MCF 10A (cell line): ENCODE measurements at regions of chr4 and their contacts with region 1.

Region 1: GRCh38 chr4:173318648-173319211 is 15.4 kb downstream of the HMGB2 start:
- DNase-seq: peak; percentile 56
- H3K4me3 Mint-ChIP-seq: no peak overlapping the region
- H3K27ac Mint-ChIP-seq: no peak overlapping the region
- H3K4me1 Mint-ChIP-seq: peaks cover 12% of the 10 kb centered on the region
- H3K27me3 Mint-ChIP-seq: no peaks in the 10 kb centered on the region
- CTCF ChIP-seq: peak; percentile 46

Region 2: GRCh38 chr4:173307778-173308177 is 11.0 kb before region 1 on chr4:
- CTCF ChIA-PET with region 1: interaction called, 26 read pairs
- POLR2A ChIA-PET with region 1: no interaction called
- intact Hi-C with region 1: no loop called
- DNase-seq: no peak
- H3K4me3 Mint-ChIP-seq: no peak overlapping the region
- H3K27ac Mint-ChIP-seq: no peak overlapping the region
- H3K4me1 Mint-ChIP-seq: no peaks in the 10 kb centered on the region
- H3K27me3 Mint-ChIP-seq: no peaks in the 10 kb centered on the region
- CTCF ChIP-seq: no peak

Region 3: GRCh38 chr4:173334085-173334772 is 15.5 kb after region 1 on chr4 and contains the start of gene HMGB2:
- CTCF ChIA-PET with region 1: interaction called, 13 read pairs
- POLR2A ChIA-PET with region 1: interaction called, 95 read pairs
- intact Hi-C with region 1: no loop called
- DNase-seq: peak; percentile 100
- H3K4me3 Mint-ChIP-seq: peak within 1 kb of the TSS; percentile 99
- H3K27ac Mint-ChIP-seq: peak within 1 kb of the TSS; percentile 100
- H3K4me1 Mint-ChIP-seq: peaks cover 14% of the 10 kb centered on the region
- H3K27me3 Mint-ChIP-seq: no peaks in the 10 kb centered on the region
- CTCF ChIP-seq: no peak
- total RNA-seq, gene HMGB2: 124 and 176 TPM in 2 replicates

Region 4: GRCh38 chr4:173370477-173371291 is 52.0 kb after region 1 on chr4 and contains the start of gene SAP30:
- CTCF ChIA-PET with region 1: interaction called, 8 read pairs
- POLR2A ChIA-PET with region 1: interaction called, 49 read pairs
- intact Hi-C with region 1: no loop called
- DNase-seq: peak; percentile 98
- H3K4me3 Mint-ChIP-seq: peak within 1 kb of the TSS; percentile 96
- H3K27ac Mint-ChIP-seq: peak within 1 kb of the TSS; percentile 96
- H3K4me1 Mint-ChIP-seq: peaks cover 20% of the 10 kb centered on the region
- H3K27me3 Mint-ChIP-seq: no peaks in the 10 kb centered on the region
- CTCF ChIP-seq: no peak
- total RNA-seq, gene SAP30: 17.6 and 30.6 TPM in 2 replicates

Region 5: GRCh38 chr4:173413036-173413435 is 94.3 kb after region 1 on chr4:
- CTCF ChIA-PET with region 1: interaction called, 124 read pairs
- POLR2A ChIA-PET with region 1: interaction called, 28 read pairs
- intact Hi-C with region 1: loop called (anchors 1 kb)
- DNase-seq: peak; percentile 79
- H3K4me3 Mint-ChIP-seq: peak overlapping the region; percentile 21
- H3K27ac Mint-ChIP-seq: peak overlapping the region; percentile 40
- H3K4me1 Mint-ChIP-seq: peaks cover 58% of the 10 kb centered on the region
- H3K27me3 Mint-ChIP-seq: no peaks in the 10 kb centered on the region
- CTCF ChIP-seq: no peak

Region 6: DNA sequence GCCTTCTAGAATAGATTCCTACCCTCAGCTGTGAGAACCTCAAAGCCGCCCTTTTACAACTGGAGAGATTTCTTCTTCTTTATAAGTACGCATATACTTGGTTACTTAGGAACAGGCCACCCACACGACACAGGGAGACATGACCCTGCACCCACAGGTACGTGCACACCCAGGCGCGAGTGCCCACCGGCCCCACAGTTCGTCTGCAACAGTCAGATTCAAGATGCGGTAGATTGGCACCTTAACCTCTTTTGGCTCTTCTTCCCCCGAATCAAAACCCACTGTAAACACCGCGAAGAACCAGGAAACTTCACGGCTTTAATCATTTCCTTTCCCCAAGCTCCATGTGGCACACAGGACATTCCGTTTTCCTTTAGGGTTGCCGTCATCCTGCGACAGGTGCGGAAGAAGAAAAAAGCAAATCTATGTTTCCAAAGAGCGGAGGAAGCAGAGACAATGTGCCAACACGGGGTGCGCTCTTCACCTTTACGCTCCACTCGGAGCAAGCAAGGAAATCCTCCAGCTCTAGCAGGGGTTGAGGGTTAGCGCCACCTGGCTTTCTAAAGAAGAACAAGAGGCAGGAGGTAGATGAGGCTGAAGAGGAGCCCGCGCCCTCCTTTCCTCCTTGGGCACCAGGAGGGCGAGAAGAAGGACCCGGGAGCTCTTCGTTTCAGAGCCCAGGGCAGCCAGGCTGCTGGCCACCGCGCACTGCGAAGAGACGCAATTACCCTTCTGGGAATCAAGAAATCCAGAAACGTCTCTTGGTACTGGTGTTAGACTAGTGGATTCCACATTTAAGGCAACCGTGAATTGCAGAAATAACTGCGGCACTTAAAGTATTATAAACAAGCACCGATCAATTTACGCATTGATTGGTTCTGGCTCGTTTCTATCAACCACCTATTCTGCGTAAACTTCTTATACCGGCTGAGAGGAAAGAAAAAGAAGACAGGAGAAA is 175.6 kb after region 1 on chr4:
- CTCF ChIA-PET with region 1: interaction called, 3 read pairs
- POLR2A ChIA-PET with region 1: interaction called, 3 read pairs
- intact Hi-C with region 1: loop called (anchors 2 kb)
- DNase-seq: peak; percentile 76
- H3K4me3 Mint-ChIP-seq: peak overlapping the region; percentile 67
- H3K27ac Mint-ChIP-seq: no peak overlapping the region
- H3K4me1 Mint-ChIP-seq: peaks cover 8% of the 10 kb centered on the region
- H3K27me3 Mint-ChIP-seq: peaks cover 14% of the 10 kb centered on the region
- CTCF ChIP-seq: peak; percentile 61

Region 7: DNA sequence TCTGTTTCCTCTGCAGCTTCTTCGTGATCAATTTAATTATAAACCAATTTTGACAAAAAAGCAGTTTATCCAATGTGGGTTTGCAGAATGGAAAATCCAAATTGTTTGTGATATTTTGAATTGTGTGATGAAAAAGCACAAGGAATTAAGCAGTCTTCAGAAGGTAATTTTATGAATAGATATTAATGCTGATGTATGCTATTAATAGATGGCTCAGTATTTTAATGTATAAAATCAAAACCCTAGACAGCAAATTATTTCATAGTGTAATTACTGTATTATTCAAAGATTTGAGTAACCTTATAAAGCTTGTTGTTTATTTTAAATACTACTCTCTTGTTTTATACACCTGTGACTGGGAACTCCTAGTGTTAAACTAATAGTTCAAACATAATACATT is 985.0 kb after region 1 on chr4:
- CTCF ChIA-PET with region 1: no interaction called
- POLR2A ChIA-PET with region 1: no interaction called
- intact Hi-C with region 1: no loop called
- DNase-seq: no peak
- H3K4me3 Mint-ChIP-seq: no peak overlapping the region
- H3K27ac Mint-ChIP-seq: no peak overlapping the region
- H3K4me1 Mint-ChIP-seq: no peaks in the 10 kb centered on the region
- H3K27me3 Mint-ChIP-seq: no peaks in the 10 kb centered on the region
- CTCF ChIP-seq: no peak